ENCODE measurements at regions of chr1 and their contacts with region 1.

Region 1: DNA sequence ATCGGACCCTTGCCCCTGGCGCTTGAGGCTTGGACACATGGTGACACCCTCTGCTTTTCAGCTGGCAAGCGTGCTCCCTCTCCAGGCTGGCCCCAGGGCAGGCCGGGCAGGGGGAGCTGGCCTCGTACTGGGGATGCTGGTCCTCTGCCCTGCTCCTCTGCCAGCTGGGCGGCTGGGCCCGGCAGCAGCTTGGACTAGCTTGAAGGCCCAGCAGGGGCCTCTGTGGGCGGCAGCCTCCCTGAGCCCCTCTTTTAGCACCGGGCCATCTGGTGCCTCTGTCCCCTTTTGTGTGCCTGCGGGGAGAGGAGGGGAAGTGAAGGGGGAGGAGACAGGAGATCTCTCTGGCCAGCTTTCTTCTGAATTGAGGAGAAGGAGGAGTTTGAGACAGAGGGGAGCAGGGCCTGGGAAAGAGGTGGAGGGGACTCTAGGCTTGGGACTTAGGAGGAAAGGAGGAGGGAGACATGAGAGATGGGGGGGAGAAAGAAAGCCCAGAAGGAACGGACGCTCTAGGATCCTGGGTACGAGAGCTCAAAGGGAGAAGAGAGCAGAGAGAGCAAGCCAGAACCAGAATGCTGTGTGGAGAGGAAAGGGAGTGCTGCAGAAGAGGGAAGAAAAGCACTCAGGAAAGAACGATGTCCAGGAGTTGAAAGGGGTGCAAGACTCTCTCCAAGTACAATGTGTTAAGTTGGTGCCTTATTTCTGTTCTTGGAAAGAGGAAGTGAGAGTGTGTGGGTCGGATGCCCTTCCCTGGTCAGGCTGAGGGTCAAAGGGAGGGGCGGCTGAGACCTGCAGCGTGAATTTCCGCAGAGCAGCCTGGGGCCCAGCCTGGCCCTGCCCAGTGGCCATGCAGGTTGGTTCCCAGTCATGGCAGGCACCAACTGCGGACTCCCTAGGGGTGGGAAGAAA is 40.3 kb downstream of the IER5 start:
- DNase-seq: peak in 2 of 3 donors; percentile 61 to 72
- H3K4me3 ChIP-seq: peak overlapping the region in 5 of 7 experiments; percentile 21 to 48 (median 38)
- H3K27ac ChIP-seq: peak overlapping the region in 1 of 2 experiments; percentile 28
- H3K4me1 ChIP-seq: peaks cover 12 to 82% (median 53%) of the 10 kb centered on the region in 4 experiments
- H3K27me3 ChIP-seq: no peaks in the 10 kb centered on the region

Region 2: DNA sequence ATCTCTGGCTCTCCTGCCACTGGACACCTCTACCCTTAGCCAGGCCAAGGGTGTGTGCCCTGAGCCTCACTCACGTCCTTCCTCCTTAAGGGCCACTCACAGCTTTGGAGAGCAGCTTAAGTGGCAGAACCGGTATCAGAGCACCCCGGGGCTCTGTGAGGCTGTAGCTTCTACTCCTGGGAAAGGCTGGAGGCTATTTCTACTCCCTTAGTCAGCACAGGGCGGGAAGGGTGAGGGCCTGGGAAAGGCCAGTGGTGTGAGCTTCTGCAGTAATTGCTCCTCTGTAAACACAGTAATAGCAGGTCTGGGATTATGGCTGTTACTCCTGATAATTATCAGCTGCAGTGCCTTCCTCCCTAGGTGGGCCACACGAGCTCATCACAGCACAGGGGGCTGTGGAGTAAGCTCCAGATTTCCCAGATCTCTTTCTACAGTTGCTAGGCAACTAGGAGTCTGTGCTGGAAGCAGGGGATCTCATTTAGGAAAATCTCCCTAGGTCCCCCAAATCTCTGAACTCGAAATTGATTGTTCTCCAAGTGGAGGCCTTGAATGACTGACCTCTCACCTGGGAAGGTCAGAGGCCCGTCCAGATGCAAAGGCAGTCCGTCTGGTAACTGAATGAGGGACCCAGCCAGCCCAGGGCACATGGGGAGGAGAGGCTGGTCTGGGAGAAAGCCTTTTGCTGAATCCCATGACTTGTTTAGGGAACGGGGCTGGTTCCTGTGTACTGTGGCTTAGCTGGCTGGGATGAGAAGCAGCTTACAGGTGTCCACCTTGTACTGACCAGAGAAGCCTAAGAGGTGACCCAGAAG is 11.0 kb before region 1 on chr1:
- CTCF ChIA-PET with region 1: interaction called, 38 read pairs
- POLR2A ChIA-PET with region 1: interaction called, 5 read pairs
- DNase-seq: no peak
- H3K4me3 ChIP-seq: no peak overlapping the region
- H3K27ac ChIP-seq: no peak overlapping the region
- H3K4me1 ChIP-seq: peaks cover 0 to 9% (median 0%) of the 10 kb centered on the region in 4 experiments
- H3K27me3 ChIP-seq: no peaks in the 10 kb centered on the region

Region 3: DNA sequence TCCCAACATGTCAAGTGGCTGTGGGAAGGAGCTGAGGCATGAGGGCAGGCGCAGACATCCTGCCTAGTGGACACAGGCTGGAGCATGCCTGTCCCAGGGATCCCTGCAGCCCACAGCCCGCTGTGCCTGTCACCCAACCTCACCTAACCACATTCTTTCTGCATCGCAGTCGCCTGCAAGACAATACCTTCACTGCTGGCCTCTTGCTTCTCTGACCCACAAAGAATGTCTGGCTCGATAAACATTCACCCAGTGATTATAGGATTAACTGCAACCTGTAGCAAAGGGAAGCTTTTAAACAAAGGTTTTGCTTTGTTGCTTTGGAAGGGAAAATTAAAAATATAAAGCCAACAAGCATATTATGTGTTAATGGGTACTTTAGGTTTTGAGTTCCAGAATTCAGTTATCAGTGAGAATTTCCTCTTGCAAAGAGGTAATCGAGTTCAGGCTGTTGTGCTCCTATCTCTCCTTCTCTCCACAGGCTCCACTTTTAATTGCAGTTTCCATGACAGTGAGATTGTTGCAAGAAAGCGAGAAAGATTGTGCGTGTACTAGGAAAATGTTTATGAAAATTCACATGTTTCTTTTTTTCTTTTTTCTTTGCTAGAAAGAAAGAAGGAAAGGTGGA is 972.7 kb after region 1 on chr1:
- CTCF ChIA-PET with region 1: no interaction called
- POLR2A ChIA-PET with region 1: no interaction called
- DNase-seq: no peak
- H3K4me3 ChIP-seq: no peak overlapping the region
- H3K27ac ChIP-seq: no peak overlapping the region
- H3K4me1 ChIP-seq: no peaks in the 10 kb centered on the region
- H3K27me3 ChIP-seq: peaks cover 2 to 12% (median 6%) of the 10 kb centered on the region in 5 experiments